Calu3 (cell line): ENCODE measurements at regions of chr5 and their contacts with region 1.

Region 1: DNA sequence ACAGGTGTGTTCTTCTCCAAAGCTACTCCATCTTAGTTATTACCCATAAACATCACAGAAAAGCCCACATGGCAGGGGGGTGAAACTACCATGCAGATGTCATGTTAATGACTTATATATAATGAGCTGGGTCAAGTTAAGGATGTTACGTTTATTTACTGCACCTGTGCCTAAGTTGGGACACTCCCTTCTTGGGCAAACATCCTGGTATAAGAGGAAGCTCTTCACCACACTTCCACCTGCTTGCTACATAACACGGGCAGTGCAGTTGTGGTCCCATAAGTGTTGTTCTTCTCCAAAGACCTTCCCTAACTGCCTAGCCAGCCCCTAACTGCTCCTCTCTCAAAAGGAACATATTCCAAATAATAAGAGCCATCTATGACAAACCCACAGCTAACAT is 9.3 kb upstream of the ZCCHC9 start:
- DNase-seq: no peak
- H3K4me3 Mint-ChIP-seq: no peak overlapping the region
- H3K27ac Mint-ChIP-seq: no peak overlapping the region
- H3K4me1 Mint-ChIP-seq: peaks cover 2% of the 10 kb centered on the region
- H3K27me3 Mint-ChIP-seq: no peaks in the 10 kb centered on the region
- CTCF ChIP-seq: no peak

Region 2: GRCh38 chr5:81247441-81247972 is 44.6 kb before region 1 on chr5:
- CTCF ChIA-PET with region 1: interaction called, 3 read pairs
- intact Hi-C with region 1: loop called (anchors 10 kb)
- DNase-seq: no peak
- H3K4me3 Mint-ChIP-seq: no peak overlapping the region
- H3K27ac Mint-ChIP-seq: peak overlapping the region; percentile 36
- H3K4me1 Mint-ChIP-seq: peaks cover 48% of the 10 kb centered on the region
- H3K27me3 Mint-ChIP-seq: no peaks in the 10 kb centered on the region
- CTCF ChIP-seq: no peak

Region 3: DNA sequence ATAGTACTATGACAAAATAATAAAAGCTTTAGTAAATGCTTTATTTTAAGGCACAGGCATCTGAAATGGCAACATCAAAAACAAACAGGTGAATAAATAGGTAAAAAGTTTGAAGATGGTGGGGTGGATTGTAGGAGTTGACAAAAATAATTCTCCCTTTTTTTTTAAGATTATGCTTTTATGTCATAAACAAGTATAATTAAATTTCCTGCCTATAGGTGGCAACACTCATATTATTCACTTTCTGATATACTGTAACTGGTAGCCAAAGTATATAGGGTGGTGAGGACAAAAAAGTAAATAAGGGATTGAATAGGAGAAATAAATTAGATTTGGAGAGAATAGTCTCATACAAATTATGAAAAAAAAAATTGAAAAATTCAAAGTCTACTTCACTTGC is 221.9 kb after region 1 on chr5:
- CTCF ChIA-PET with region 1: no interaction called
- intact Hi-C with region 1: no loop called
- DNase-seq: no peak
- H3K4me3 Mint-ChIP-seq: no peak overlapping the region
- H3K27ac Mint-ChIP-seq: no peak overlapping the region
- H3K4me1 Mint-ChIP-seq: no peaks in the 10 kb centered on the region
- H3K27me3 Mint-ChIP-seq: no peaks in the 10 kb centered on the region
- CTCF ChIP-seq: no peak